Mammary epithelial cell (primary cell): ENCODE measurements at regions of chr19 and their contacts with region 1.

Region 1: DNA sequence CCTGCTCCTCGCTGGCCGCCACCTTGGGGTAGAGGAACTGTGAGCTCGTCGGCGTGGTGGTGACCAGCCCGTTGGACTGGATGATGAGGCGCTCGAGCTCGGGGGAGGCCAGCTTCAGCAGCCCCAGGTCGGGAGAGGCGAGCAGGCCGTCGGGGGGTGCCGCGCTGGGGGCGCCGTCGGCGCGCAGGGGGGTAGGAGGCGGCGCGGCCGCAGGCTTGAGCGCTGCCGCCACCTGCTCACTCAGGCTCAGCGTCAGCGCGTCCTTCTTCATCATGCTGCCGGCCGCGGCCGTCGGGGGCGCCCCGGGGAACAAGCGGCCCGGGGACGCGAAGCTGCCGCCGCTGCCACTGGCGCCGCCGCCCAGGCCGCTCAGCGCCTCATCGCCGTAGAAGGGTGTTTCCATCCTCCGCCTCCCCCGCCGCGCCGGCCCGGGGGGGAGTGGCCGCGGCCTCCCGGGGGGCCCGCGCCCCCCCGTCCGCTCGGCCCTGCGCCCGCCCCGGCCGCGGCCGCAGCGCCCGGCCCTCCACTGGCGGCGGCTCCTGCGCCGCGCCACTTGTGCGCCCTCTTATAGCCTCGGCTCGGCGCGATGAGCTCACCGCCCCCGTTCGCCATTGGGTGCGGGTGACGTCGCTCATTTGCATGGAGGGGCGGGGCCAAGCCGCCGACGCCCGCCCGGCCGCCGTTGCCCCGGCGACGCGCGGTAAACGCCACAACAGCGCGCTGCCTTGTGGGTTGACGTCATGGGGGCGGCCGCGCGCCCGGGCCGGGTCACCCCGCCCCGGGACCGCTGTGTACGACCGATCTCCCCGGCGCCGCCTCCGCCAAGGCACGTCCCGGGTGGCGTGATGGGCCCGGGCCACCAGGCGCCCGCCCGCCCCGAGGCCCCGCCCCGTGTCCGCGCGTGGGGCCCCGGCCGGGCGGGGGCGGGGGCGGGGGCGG is at the start of gene JUND:
- DNase-seq: peak; percentile 98
- H3K4me3 ChIP-seq: peak within 1 kb of the TSS; percentile 92 to 99 (median 96)
- H3K27ac ChIP-seq: peak within 1 kb of the TSS; percentile 95
- H3K4me1 ChIP-seq: peaks cover 23% of the 10 kb centered on the region
- H3K27me3 ChIP-seq: no peaks in the 10 kb centered on the region
- CTCF ChIP-seq: no peak
- total RNA-seq, gene JUND: 59.6 to 74.0 TPM

Region 2: GRCh38 chr19:18224525-18225354 is 56.6 kb before region 1 on chr19:
- CTCF ChIA-PET with region 1: no interaction called
- dilution Hi-C with region 1: no loop called
- in situ Hi-C with region 1: no loop called
- intact Hi-C with region 1: no loop called
- DNase-seq: peak; percentile 94
- H3K4me3 ChIP-seq: peak overlapping the region; percentile 26 to 54 (median 39)
- H3K27ac ChIP-seq: no peak overlapping the region
- H3K4me1 ChIP-seq: peaks cover 8% of the 10 kb centered on the region
- H3K27me3 ChIP-seq: peaks cover 5% of the 10 kb centered on the region
- CTCF ChIP-seq: no peak

Region 3: DNA sequence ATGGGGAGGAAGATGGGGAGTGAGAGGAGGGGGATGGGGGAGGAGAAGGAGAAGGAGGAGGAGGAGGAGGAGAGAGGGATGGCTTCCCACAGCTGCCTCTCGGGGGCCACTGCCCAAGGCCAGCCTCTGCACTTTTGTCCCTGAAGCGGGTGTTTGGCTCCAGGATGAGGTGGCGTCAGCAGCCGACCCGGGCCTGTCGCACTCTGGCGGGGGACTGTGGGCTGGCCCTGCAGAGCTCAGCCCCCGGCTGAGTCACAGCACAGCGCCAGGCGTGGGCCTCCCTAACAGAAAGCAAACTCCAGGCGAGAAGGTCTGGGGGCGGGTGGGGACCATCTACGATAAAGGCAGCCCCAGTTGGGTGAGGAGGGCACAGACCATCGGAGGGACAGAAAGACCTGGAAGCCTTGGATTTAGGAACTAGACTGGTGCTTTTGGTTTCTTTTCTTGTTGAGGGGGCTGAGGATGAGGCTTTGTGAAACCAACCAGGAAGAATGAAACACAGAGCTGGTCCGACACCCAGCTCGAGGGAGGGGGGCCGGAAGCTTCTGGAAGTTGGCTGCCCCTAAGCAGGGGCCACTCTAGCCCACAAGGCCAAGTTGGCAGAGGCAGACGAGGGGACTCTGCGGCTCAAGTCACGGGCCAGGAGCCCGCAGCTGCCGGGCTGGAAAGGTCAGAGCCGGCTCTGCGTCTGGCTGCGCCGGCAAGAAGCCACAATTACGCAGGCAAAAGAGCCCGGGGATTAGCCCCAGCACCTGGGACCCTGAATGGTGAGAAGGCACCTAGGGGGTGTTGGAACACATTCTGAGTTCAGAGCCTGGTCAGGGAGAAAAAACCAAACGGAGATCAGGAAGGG is 23.3 kb after region 1 on chr19:
- CTCF ChIA-PET with region 1: no interaction called
- dilution Hi-C with region 1: no loop called
- in situ Hi-C with region 1: no loop called
- intact Hi-C with region 1: loop called (anchors 2 kb)
- DNase-seq: peak; percentile 48
- H3K4me3 ChIP-seq: peak overlapping the region; percentile 8 to 21 (median 11)
- H3K27ac ChIP-seq: peak overlapping the region; percentile 66
- H3K4me1 ChIP-seq: peaks cover 28% of the 10 kb centered on the region
- H3K27me3 ChIP-seq: no peaks in the 10 kb centered on the region
- CTCF ChIP-seq: no peak

Region 4: DNA sequence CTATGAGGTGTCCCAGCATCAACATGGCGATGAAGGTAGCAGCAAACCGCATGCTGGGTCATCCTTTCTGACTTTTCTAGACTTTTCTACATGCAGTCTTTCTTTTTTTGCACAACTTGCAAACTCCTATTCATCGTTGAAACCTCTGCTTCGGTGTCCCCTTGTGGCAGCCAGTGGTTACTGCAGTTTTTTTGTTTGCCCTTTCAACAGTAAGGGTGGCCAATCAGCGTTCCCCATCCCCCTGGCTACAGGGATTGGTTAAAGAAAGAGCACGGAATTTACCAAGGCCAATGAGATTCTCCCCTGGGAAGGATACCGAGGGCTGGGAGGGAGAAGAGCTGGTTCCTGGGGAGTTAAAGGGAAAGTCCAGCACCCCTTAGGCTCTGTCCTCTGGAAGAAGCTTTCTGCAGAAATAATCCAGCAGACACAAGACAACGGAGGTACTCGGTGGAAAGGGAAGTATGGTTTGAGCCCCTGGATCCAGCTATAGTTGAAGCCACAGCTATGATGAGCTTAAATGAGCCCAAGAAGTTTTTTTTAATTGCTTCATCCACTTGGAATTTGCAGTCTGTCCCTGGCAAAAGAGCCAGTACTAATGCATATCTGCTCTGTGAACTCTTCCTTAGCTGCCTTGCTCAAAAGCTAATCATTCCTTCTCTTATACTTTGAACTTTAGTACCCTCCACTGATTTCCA is 47.1 kb after region 1 on chr19:
- CTCF ChIA-PET with region 1: interaction called, 28 read pairs
- dilution Hi-C with region 1: no loop called
- in situ Hi-C with region 1: loop called (anchors 5 to 10 kb)
- intact Hi-C with region 1: loop called (anchors 1 kb)
- DNase-seq: peak; percentile 97
- H3K4me3 ChIP-seq: peak overlapping the region in 2 of 3 experiments; percentile 24 to 37
- H3K27ac ChIP-seq: no peak overlapping the region
- H3K4me1 ChIP-seq: peaks cover 13% of the 10 kb centered on the region
- H3K27me3 ChIP-seq: no peaks in the 10 kb centered on the region
- CTCF ChIP-seq: peak; percentile 88 to 94

Region 5: GRCh38 chr19:18408053-18408476 is 126.7 kb after region 1 on chr19:
- CTCF ChIA-PET with region 1: no interaction called
- dilution Hi-C with region 1: no loop called
- in situ Hi-C with region 1: loop called in 1 of 2 experiments (anchors 10 kb)
- intact Hi-C with region 1: loop called (anchors 1 kb)
- DNase-seq: no peak
- H3K4me3 ChIP-seq: no peak overlapping the region
- H3K27ac ChIP-seq: no peak overlapping the region
- H3K4me1 ChIP-seq: peaks cover 3% of the 10 kb centered on the region
- H3K27me3 ChIP-seq: no peaks in the 10 kb centered on the region
- CTCF ChIP-seq: peak; percentile 20 to 38